ENCODE measurements at regions of chr20 and their contacts with region 1.

Region 1: DNA sequence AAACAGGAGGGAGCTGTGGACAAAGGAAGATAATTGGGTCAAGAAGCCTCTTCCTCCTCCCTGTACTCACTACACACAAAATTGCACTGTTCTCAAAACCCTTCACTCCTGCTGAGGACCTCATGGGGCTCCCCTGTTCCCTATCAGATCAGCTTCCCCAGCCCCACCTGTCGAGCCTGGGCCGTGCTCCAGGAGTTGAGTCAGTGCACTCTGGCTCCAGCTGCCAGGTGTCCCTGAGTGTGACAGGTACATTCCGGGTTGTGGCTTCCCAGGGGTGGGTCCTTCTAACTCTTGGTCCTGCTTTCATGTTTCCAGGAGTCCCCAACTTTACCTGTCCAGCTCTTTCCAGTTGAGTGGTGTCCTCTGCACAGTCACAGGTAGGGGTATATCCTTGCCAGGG is 8.4 kb downstream of the RAB5IF start:
- DNase-seq: no peak
- H3K4me3 Mint-ChIP-seq: no peak overlapping the region
- H3K27ac Mint-ChIP-seq: peak overlapping the region; percentile 53
- H3K4me1 Mint-ChIP-seq: peaks cover 9% of the 10 kb centered on the region
- H3K27me3 Mint-ChIP-seq: no peaks in the 10 kb centered on the region

Region 2: GRCh38 chr20:36728986-36729385 is 115.0 kb after region 1 on chr20:
- CTCF ChIA-PET with region 1: interaction called, 5 read pairs
- intact Hi-C with region 1: loop called (anchors 1 kb)
- DNase-seq: peak; percentile 10
- H3K4me3 Mint-ChIP-seq: no peak overlapping the region
- H3K27ac Mint-ChIP-seq: no peak overlapping the region
- H3K4me1 Mint-ChIP-seq: peaks cover 19% of the 10 kb centered on the region
- H3K27me3 Mint-ChIP-seq: no peaks in the 10 kb centered on the region

Region 3: GRCh38 chr20:36754656-36755222 is 140.8 kb after region 1 on chr20:
- CTCF ChIA-PET with region 1: interaction called, 10 read pairs
- intact Hi-C with region 1: loop called (anchors 1 kb)
- DNase-seq: peak; percentile 52
- H3K4me3 Mint-ChIP-seq: no peak overlapping the region
- H3K27ac Mint-ChIP-seq: no peak overlapping the region
- H3K4me1 Mint-ChIP-seq: peaks cover 6% of the 10 kb centered on the region
- H3K27me3 Mint-ChIP-seq: no peaks in the 10 kb centered on the region

Region 4: GRCh38 chr20:36886859-36887751 is 273.1 kb after region 1 on chr20:
- CTCF ChIA-PET with region 1: no interaction called
- intact Hi-C with region 1: loop called (anchors 2 kb)
- DNase-seq: peak; percentile 92
- H3K4me3 Mint-ChIP-seq: no peak overlapping the region
- H3K27ac Mint-ChIP-seq: peak overlapping the region; percentile 54
- H3K4me1 Mint-ChIP-seq: peaks cover 10% of the 10 kb centered on the region
- H3K27me3 Mint-ChIP-seq: no peaks in the 10 kb centered on the region